Heart right ventricle (tissue), 16 donors: ENCODE measurements at regions of chr3 and their contacts with region 1.

Region 1: GRCh38 chr3:16190704-16191103 is 16.2 kb downstream of the GALNT15 start:
- DNase-seq: no peak
- ATAC-seq: peak in 1 of 8 donors; percentile 63
- H3K4me3 ChIP-seq: no peak overlapping the region
- H3K27ac ChIP-seq: no peak overlapping the region
- H3K4me1 ChIP-seq: peaks cover 0 to 5% (median 0%) of the 10 kb centered on the region in 9 donors
- H3K27me3 ChIP-seq: no peaks in the 10 kb centered on the region
- CTCF ChIP-seq: no peak

Region 2: DNA sequence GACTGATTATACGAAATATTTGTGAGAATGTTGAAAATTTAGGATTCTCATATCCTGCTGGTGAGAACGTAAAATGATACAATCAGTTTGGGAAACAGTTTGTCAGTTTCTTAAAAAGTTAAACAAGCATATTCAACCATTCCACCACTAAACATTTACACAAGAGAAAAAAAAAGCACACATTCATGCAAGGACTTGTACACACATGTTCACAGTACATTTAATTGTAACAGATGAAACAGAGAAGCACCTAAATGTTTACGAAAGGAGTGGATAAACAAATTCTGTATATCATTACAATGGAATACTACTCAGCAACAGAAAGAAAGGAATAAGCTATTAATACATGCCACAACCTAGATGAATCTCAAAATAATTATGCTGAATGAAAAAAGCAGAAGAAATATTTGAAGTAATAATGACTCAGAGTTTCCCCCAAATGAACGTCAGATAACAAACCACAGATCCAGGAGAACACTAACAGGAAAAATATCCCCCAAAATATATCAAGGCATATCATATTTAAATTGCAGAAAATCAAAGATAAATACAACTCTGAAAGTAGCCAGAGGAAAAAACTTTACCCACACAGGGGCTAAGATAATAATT is 407.2 kb before region 1 on chr3:
- intact Hi-C with region 1: no loop called
- DNase-seq: no peak
- ATAC-seq: no peak
- H3K4me3 ChIP-seq: no peak overlapping the region
- H3K27ac ChIP-seq: peak overlapping the region in 1 of 10 donors; percentile 12
- H3K4me1 ChIP-seq: peaks cover 0 to 22% (median 10%) of the 10 kb centered on the region in 9 donors
- H3K27me3 ChIP-seq: no peaks in the 10 kb centered on the region
- CTCF ChIP-seq: no peak

Region 3: GRCh38 chr3:16227566-16227965 is 36.9 kb after region 1 on chr3:
- intact Hi-C with region 1: loop called in 1 of 10 experiments (anchors 5 kb)
- DNase-seq: no peak
- ATAC-seq: no peak
- H3K4me3 ChIP-seq: no peak overlapping the region
- H3K27ac ChIP-seq: no peak overlapping the region
- H3K4me1 ChIP-seq: peaks cover 0 to 11% (median 0%) of the 10 kb centered on the region in 9 donors
- H3K27me3 ChIP-seq: no peaks in the 10 kb centered on the region
- CTCF ChIP-seq: no peak

Region 4: GRCh38 chr3:16300881-16301359 is 110.2 kb after region 1 on chr3:
- intact Hi-C with region 1: no loop called
- DNase-seq: no peak
- ATAC-seq: peak in 6 of 8 donors; percentile 20 to 56 (median 38)
- H3K4me3 ChIP-seq: peak overlapping the region in 1 of 10 donors; percentile 14
- H3K27ac ChIP-seq: peak overlapping the region in 2 of 10 donors; percentile 20 to 77
- H3K4me1 ChIP-seq: peaks cover 0 to 41% (median 12%) of the 10 kb centered on the region in 9 donors
- H3K27me3 ChIP-seq: no peaks in the 10 kb centered on the region
- CTCF ChIP-seq: no peak